Psoas muscle (tissue), 8 donors: ENCODE measurements at regions of chr11 and their contacts with region 1.

Region 1: DNA sequence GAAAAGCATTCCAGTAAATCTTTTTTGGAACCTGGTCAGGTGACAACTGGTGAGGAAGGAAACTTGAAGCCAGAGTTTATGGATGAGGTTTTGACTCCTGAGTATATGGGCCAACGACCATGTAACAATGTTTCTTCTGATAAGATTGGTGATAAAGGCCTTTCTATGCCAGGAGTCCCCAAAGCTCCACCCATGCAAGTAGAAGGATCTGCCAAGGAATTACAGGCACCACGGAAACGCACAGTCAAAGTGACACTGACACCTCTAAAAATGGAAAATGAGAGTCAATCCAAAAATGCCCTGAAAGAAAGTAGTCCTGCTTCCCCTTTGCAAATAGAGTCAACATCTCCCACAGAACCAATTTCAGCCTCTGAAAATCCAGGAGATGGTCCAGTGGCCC is 24.1 kb upstream of the TTC36 start:
- DNase-seq: no peak
- ATAC-seq: no peak
- H3K4me3 ChIP-seq: no peak overlapping the region
- H3K27ac ChIP-seq: no peak overlapping the region
- H3K4me1 ChIP-seq: no peaks in the 10 kb centered on the region
- H3K27me3 ChIP-seq: no peaks in the 10 kb centered on the region
- CTCF ChIP-seq: no peak

Region 2: GRCh38 chr11:118321386-118322121 is 181.7 kb before region 1 on chr11:
- intact Hi-C with region 1: no loop called
- DNase-seq: no peak
- ATAC-seq: no peak
- H3K4me3 ChIP-seq: no peak overlapping the region
- H3K27ac ChIP-seq: no peak overlapping the region
- H3K4me1 ChIP-seq: no peaks in the 10 kb centered on the region
- H3K27me3 ChIP-seq: peaks cover 0 to 3% (median 0%) of the 10 kb centered on the region in 3 donors
- CTCF ChIP-seq: no peak

Region 3: DNA sequence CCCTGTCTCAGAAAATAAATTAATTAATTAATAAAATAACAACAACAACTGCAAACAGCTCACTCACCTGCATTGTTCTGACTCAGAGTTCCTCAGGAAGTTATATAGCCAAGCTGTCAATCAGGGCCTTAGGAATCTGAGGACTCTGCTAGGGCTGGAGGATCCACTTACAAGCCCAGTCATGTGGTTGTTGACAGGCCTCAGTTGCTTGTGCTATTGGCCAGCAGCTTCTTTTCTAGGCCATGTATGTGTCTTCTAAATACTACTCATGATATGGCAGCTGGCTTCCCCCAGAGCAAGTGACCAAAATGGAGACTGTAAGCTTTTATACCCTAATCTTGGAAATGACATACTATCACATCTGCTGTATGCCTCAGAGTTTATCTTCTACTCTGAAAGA is 122.6 kb before region 1 on chr11:
- intact Hi-C with region 1: loop called in 1 of 2 experiments (anchors 5 kb)
- DNase-seq: no peak
- ATAC-seq: peak; percentile 96 to 98 (median 97)
- H3K4me3 ChIP-seq: no peak overlapping the region
- H3K27ac ChIP-seq: peak overlapping the region; percentile 84
- H3K4me1 ChIP-seq: peaks cover 9% of the 10 kb centered on the region
- H3K27me3 ChIP-seq: no peaks in the 10 kb centered on the region
- CTCF ChIP-seq: no peak

Region 4: DNA sequence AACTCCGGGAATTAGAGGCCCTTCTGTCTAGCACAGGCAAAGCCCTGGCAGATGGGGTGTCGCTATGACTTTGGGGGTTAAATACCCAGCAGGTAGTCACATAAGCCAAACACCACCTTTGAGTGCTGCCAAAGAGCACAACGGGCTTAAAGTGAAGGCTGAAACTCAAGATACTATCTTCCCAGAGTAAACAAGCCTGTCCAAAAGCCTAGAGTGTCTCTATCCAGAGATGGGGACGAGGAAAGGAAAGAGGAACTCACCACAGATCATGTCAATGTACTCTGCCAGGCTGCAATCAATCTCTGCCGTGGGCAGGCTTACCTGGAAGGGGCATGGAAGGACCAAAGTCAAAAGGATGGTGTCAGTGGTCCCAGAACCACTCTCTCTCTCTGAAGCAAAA is 42.3 kb after region 1 on chr11:
- intact Hi-C with region 1: no loop called
- DNase-seq: no peak
- ATAC-seq: no peak
- H3K4me3 ChIP-seq: no peak overlapping the region
- H3K27ac ChIP-seq: no peak overlapping the region
- H3K4me1 ChIP-seq: no peaks in the 10 kb centered on the region
- H3K27me3 ChIP-seq: no peaks in the 10 kb centered on the region
- CTCF ChIP-seq: no peak

Region 5: DNA sequence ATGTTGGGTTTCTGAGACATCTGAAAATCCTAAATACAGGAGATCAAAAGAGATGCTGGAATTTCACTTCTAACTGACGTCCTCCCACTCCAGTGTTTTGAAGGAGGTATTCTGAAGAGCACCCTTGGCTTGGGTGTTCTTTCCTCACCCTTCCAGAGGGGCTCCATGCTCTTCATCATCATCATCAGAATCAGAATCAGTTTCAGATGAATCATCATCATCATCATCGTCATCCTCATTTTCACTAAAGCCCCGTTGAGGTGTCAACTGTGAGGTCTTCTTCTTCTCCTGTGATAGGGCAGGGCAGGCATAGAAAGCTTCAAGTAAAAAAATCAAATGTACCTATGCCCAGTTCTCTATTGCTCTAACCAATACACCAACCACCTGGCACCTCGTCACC is 53.5 kb after region 1 on chr11:
- intact Hi-C with region 1: loop called in 1 of 2 experiments (anchors 5 kb)
- DNase-seq: no peak
- ATAC-seq: no peak
- H3K4me3 ChIP-seq: no peak overlapping the region
- H3K27ac ChIP-seq: no peak overlapping the region
- H3K4me1 ChIP-seq: no peaks in the 10 kb centered on the region
- H3K27me3 ChIP-seq: no peaks in the 10 kb centered on the region
- CTCF ChIP-seq: no peak